CD8-positive, alpha-beta T cell (primary cell): ENCODE measurements at regions of chr5 and their contacts with region 1.

Region 1: GRCh38 chr5:108681079-108681921 is 66.4 kb upstream of the FER start:
- DNase-seq: peak in 3 of 9 experiments; percentile 20 to 69 (median 60)
- ATAC-seq: peak; percentile 73
- H3K4me3 ChIP-seq: no peak overlapping the region
- H3K4me3 Mint-ChIP-seq: no peak overlapping the region
- H3K27ac ChIP-seq: no peak overlapping the region
- H3K27ac Mint-ChIP-seq: no peak overlapping the region
- H3K4me1 ChIP-seq: no peaks in the 10 kb centered on the region
- H3K4me1 Mint-ChIP-seq: no peaks in the 10 kb centered on the region
- H3K27me3 ChIP-seq: no peaks in the 10 kb centered on the region
- H3K27me3 Mint-ChIP-seq: peaks cover 3% of the 10 kb centered on the region
- CTCF ChIP-seq: peak; percentile 68

Region 2: GRCh38 chr5:108531367-108532128 is 149.8 kb before region 1 on chr5:
- CTCF ChIA-PET with region 1: no interaction called
- POLR2A ChIA-PET with region 1: no interaction called
- intact Hi-C with region 1: no loop called
- DNase-seq: no peak
- ATAC-seq: no peak
- H3K4me3 ChIP-seq: no peak overlapping the region
- H3K4me3 Mint-ChIP-seq: no peak overlapping the region
- H3K27ac ChIP-seq: no peak overlapping the region
- H3K27ac Mint-ChIP-seq: no peak overlapping the region
- H3K4me1 ChIP-seq: no peaks in the 10 kb centered on the region
- H3K4me1 Mint-ChIP-seq: no peaks in the 10 kb centered on the region
- H3K27me3 ChIP-seq: no peaks in the 10 kb centered on the region
- H3K27me3 Mint-ChIP-seq: peaks cover 4% of the 10 kb centered on the region
- CTCF ChIP-seq: no peak

Region 3: DNA sequence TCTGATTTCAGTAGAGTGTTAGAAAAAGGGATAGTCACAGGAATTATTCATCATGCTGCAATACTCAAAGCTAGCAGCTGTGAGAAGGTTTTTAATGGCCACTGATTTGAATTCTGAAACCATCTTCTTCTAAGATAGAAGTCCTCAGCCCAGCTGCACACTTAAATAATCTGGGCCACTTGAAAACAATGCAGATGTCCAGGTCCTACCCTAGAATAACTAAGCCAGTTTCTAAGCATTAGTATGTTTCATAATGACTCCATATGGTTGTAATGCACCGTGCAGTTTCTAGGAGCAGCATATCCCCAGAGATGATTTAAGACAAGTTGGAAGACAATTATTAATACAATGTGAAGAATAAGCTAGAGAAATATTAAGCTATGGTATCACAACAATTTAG is 139.5 kb before region 1 on chr5:
- CTCF ChIA-PET with region 1: no interaction called
- POLR2A ChIA-PET with region 1: no interaction called
- intact Hi-C with region 1: no loop called
- DNase-seq: no peak
- ATAC-seq: no peak
- H3K4me3 ChIP-seq: no peak overlapping the region
- H3K4me3 Mint-ChIP-seq: no peak overlapping the region
- H3K27ac ChIP-seq: no peak overlapping the region
- H3K27ac Mint-ChIP-seq: no peak overlapping the region
- H3K4me1 ChIP-seq: no peaks in the 10 kb centered on the region
- H3K4me1 Mint-ChIP-seq: no peaks in the 10 kb centered on the region
- H3K27me3 ChIP-seq: no peaks in the 10 kb centered on the region
- H3K27me3 Mint-ChIP-seq: peaks cover 3% of the 10 kb centered on the region
- CTCF ChIP-seq: no peak

Region 4: DNA sequence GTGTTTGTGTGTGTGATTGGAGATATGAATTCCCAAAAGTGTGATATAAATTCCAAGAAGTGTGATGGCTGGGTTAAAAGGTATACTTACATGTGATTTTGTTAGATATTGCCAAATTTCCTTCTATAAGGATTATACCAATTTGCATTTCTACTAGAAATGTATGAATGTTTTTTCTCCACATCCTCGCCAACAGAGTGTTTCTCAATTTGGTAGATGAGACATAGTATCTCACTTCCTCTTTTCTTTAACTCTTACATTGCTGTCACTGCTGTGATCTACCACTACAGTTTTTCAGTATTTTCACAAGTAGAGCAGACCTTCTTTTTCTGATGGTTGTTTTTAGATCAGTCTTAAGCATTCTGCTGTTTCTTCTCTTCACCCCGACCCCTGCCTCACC is 177.7 kb after region 1 on chr5:
- CTCF ChIA-PET with region 1: no interaction called
- POLR2A ChIA-PET with region 1: no interaction called
- intact Hi-C with region 1: no loop called
- DNase-seq: peak in 1 of 9 experiments; percentile 5
- ATAC-seq: no peak
- H3K4me3 ChIP-seq: no peak overlapping the region
- H3K4me3 Mint-ChIP-seq: no peak overlapping the region
- H3K27ac ChIP-seq: no peak overlapping the region
- H3K27ac Mint-ChIP-seq: no peak overlapping the region
- H3K4me1 ChIP-seq: no peaks in the 10 kb centered on the region
- H3K4me1 Mint-ChIP-seq: peaks cover 4% of the 10 kb centered on the region
- H3K27me3 ChIP-seq: no peaks in the 10 kb centered on the region
- H3K27me3 Mint-ChIP-seq: no peaks in the 10 kb centered on the region
- CTCF ChIP-seq: no peak

Region 5: DNA sequence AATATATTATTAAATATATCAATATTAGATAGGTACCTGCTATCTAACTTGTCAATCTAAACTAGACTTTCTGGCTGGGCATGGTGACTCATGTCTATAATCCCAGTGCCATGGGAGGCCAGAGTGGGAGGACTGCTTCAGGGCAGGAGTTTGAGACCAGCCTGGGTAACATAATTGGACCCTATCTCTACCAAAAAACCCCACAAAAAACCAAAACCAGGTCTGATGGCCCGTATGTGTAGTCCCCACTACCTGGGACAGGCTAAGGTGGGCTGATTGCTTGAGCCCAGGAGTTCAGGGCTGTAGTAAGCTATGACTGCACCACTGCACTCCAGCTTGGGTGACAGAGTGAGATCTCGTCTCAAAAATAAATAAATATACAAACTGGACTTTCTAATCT is 673.5 kb after region 1 on chr5:
- CTCF ChIA-PET with region 1: no interaction called
- POLR2A ChIA-PET with region 1: no interaction called
- intact Hi-C with region 1: loop called in 1 of 2 experiments (anchors 10 kb)
- DNase-seq: no peak
- ATAC-seq: no peak
- H3K4me3 ChIP-seq: no peak overlapping the region
- H3K4me3 Mint-ChIP-seq: no peak overlapping the region
- H3K27ac ChIP-seq: no peak overlapping the region
- H3K27ac Mint-ChIP-seq: no peak overlapping the region
- H3K4me1 ChIP-seq: no peaks in the 10 kb centered on the region
- H3K4me1 Mint-ChIP-seq: peaks cover 26% of the 10 kb centered on the region
- H3K27me3 ChIP-seq: no peaks in the 10 kb centered on the region
- H3K27me3 Mint-ChIP-seq: no peaks in the 10 kb centered on the region
- CTCF ChIP-seq: no peak

Region 6: GRCh38 chr5:109479260-109479860 is 798.1 kb after region 1 on chr5:
- CTCF ChIA-PET with region 1: no interaction called
- POLR2A ChIA-PET with region 1: no interaction called
- intact Hi-C with region 1: loop called in 1 of 2 experiments (anchors 2 kb)
- DNase-seq: peak in 1 of 9 experiments; percentile 25
- ATAC-seq: no peak
- H3K4me3 ChIP-seq: no peak overlapping the region
- H3K4me3 Mint-ChIP-seq: no peak overlapping the region
- H3K27ac ChIP-seq: no peak overlapping the region
- H3K27ac Mint-ChIP-seq: no peak overlapping the region
- H3K4me1 ChIP-seq: no peaks in the 10 kb centered on the region
- H3K4me1 Mint-ChIP-seq: no peaks in the 10 kb centered on the region
- H3K27me3 ChIP-seq: no peaks in the 10 kb centered on the region
- H3K27me3 Mint-ChIP-seq: peaks cover 7% of the 10 kb centered on the region
- CTCF ChIP-seq: peak; percentile 37